ENCODE measurements at regions of chr4 and their contacts with region 1.

Region 1: DNA sequence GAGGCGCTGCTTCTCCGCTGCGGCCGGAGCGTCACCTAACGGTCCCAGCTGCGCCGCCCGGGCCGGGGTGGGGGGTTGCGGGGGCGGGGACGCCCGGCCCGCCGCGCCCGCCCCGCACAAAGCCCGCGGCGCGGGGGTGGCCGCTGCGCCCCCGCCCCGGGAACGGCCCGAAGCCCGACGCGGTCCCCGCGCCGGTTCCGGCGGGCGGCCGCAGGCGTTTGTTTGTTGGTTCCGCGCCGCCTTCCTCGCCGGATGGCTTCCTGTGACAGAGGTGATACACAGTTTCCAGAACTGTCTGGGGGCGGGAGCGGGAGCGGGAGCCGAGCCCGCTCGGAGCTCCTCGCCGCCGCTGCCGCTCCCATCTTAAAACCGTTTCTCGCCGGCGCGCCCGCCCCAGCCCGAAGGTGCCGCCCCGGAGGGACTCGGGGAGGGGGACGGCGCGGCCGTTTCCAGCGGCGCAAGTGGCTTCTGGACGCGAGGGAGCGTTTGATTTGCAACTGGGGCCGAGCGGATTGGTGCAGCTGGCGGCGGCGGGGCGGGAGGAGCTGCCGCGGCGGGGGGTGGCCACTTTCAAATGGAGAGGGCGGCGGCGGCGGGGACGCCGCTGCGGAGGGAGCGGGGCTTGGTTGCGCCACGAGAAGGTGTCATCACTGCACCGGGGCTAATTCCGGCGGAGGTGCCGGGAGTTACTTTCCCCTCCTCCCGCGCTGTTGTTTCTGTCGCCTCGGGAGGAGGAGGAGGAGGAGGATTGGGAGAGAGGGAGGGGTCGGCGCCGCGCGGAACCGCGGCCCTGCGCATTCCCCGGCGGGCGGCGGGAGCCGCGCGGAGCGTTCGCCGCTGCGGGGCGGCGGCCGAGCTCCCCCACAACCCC is 2.3 kb downstream of the JADE1 start:
- H3K4me3 ChIP-seq: peak overlapping the region; percentile 71
- H3K27ac ChIP-seq: peak overlapping the region; percentile 95
- H3K4me1 ChIP-seq: no peaks in the 10 kb centered on the region
- CTCF ChIP-seq: no peak

Region 2: DNA sequence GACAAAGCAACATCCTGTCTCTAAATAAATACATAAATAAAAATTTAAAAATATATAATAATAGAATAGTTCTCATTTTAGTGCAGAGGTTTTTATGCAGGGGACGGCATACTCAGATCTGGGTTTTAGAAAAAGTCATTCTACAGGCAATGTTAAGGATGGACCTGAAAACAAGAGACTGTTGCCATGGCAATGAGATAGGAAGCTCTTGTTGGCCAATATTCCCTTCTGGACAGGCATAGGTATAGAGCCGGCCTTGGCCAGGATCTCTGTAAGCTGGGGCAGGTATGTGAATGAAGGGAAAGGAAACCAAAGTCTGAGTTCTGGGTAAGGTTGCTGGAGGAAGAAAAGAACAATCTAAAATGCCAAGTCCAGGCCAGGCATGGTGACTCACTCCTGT is 189.7 kb before region 1 on chr4:
- CTCF ChIA-PET with region 1: no interaction called
- POLR2A ChIA-PET with region 1: no interaction called
- H3K4me3 ChIP-seq: no peak overlapping the region
- H3K27ac ChIP-seq: no peak overlapping the region
- H3K4me1 ChIP-seq: no peaks in the 10 kb centered on the region
- CTCF ChIP-seq: no peak

Region 3: GRCh38 chr4:128718768-128719167 is 93.0 kb before region 1 on chr4:
- CTCF ChIA-PET with region 1: no interaction called
- POLR2A ChIA-PET with region 1: no interaction called
- H3K4me3 ChIP-seq: no peak overlapping the region
- H3K27ac ChIP-seq: no peak overlapping the region
- H3K4me1 ChIP-seq: no peaks in the 10 kb centered on the region
- CTCF ChIP-seq: no peak

Region 4: GRCh38 chr4:128823025-128823661 is 11.3 kb after region 1 on chr4:
- CTCF ChIA-PET with region 1: interaction called, 6 read pairs
- POLR2A ChIA-PET with region 1: interaction called, 13 read pairs
- H3K4me3 ChIP-seq: no peak overlapping the region
- H3K27ac ChIP-seq: no peak overlapping the region
- H3K4me1 ChIP-seq: no peaks in the 10 kb centered on the region
- CTCF ChIP-seq: no peak

Measured in HEK293 (cell line).